Right ventricle myocardium superior (tissue), 1 donor: ENCODE measurements at regions of chr12 and their contacts with region 1.

Region 1: GRCh38 chr12:32051559-32052414 is 54.9 kb upstream of the BICD1 start:
- DNase-seq: no peak
- ATAC-seq: peak; percentile 81

Region 2: DNA sequence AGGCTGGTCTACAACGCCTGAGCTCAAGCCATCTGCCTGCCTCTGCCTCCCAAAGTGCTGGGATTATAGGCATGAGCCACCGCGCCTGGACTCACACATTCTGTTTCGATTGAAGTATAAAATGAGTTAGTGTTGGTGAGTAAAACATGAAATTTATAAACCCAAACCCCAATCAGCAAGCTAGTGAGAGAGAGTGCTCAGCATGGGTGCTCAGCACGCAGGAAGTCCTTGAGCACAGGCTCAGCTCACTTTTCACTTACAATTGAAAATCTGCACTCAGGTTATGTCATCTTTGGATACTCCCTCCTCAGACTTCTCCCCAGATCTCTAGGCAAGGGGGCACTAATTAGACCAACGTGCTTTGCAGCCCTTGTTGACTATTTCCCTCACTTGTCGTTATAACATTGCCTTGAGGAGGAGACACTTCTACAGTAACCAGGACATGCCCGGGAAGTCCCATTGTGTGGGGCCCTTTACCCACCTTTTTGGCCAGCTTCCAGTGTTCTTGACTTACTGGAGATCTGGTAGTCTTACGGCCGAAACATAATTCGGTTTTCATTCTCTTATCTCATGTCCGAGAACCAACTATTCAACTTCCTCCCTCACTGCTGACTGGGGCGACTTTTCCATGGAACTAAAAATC is 254.4 kb before region 1 on chr12:
- intact Hi-C with region 1: loop called (anchors 10 kb)
- DNase-seq: no peak
- ATAC-seq: no peak